Colonic mucosa (tissue), 4 donors: ENCODE measurements at regions of chr16 and their contacts with region 1.

Region 1: GRCh38 chr16:65671-66137 is 6.7 kb downstream of the RHBDF1 start:
- DNase-seq: peak; percentile 85
- H3K4me3 ChIP-seq: no peak overlapping the region
- H3K27ac ChIP-seq: no peak overlapping the region
- H3K4me1 ChIP-seq: peaks cover 4% of the 10 kb centered on the region
- H3K27me3 ChIP-seq: no peaks in the 10 kb centered on the region
- CTCF ChIP-seq: peak; percentile 95

Region 2: GRCh38 chr16:96935-97381 is 31.3 kb after region 1 on chr16:
- intact Hi-C with region 1: loop called (anchors 2 kb)
- DNase-seq: peak; percentile 89
- H3K4me3 ChIP-seq: no peak overlapping the region
- H3K27ac ChIP-seq: no peak overlapping the region
- H3K4me1 ChIP-seq: no peaks in the 10 kb centered on the region
- H3K27me3 ChIP-seq: no peaks in the 10 kb centered on the region
- CTCF ChIP-seq: peak; percentile 99

Region 3: DNA sequence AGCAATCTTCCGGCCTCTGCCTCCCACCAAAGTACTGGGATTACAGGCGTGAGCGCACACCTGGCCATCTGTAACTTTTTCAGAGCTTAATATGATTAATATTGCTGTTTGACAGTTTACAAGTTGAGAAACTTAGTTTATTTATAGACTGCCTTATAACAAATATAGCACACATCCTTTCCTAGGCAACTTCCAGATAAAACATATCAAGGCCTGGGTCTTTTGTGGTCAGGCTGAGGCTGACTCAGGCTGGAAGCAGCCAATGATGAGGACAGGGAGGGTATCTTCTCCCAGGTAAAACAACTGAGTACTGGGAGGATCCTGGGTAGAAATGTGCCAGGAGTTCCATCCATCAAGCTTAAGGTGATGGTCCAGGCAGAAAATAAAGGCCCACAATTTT is 147.3 kb after region 1 on chr16:
- intact Hi-C with region 1: no loop called
- DNase-seq: no peak
- H3K4me3 ChIP-seq: no peak overlapping the region
- H3K27ac ChIP-seq: no peak overlapping the region
- H3K4me1 ChIP-seq: no peaks in the 10 kb centered on the region
- H3K27me3 ChIP-seq: no peaks in the 10 kb centered on the region
- CTCF ChIP-seq: no peak

Region 4: DNA sequence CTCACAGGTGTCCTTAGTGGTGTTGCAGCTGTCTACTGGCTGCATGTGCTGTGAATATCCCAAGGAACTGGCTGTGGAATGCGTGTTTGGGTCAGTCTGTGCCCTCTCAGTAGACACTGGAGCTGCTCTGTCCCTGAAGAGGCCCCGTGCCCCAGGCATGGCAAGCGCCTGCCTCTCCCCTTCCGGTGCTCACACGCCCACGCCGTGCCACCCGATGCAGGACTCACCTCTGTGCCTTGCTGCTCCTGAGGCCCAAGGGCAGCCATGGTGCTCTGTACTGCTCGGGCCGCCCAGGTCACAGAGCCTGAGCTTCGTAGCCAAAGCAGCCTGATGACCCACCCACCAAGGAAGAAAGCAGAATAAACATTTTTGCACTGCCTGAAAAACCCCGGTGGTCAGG is 200.0 kb after region 1 on chr16:
- intact Hi-C with region 1: no loop called
- DNase-seq: no peak
- H3K4me3 ChIP-seq: no peak overlapping the region
- H3K27ac ChIP-seq: no peak overlapping the region
- H3K4me1 ChIP-seq: peaks cover 3% of the 10 kb centered on the region
- H3K27me3 ChIP-seq: no peaks in the 10 kb centered on the region
- CTCF ChIP-seq: no peak